ENCODE measurements at regions of chr9 and their contacts with region 1.

Region 1: DNA sequence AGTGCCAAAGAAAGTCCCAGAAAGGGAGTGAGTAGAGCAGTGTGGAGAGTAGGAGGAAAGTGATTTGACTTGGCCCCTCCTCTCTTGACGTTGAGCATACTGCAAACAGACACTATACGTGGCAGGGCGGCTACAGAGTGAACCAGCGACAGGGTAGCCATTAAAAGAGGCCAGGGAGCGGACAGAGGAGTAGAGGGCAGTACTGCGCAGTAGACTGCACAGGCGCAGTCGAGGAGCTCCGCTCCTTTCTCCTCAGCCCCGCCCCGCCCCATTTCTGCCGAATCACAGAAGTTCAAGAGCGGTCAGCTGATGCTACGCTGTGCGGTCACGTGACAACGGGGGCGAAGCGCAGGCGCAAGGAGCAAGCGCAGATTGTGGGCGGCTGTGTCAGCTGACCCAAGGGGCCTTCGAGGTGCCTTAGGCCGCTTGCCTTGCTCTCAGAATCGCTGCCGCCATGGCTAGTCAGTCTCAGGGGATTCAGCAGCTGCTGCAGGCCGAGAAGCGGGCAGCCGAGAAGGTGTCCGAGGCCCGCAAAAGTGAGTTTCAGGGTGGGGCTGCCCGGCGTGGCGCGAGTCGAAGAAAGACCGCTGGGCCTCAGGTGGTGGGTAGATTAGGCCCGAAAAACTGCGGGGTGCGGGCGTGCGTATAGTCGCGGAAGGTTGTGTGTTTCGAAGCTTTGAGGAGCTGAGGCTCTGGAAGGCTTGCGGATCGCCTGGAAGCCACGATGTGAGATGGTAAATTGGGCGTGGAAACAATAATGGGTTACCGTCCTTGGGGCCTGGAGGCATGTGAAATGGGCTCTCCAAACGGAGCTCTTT is at the start of gene ATP6V1G1:
- DNase-seq: peak; percentile 98 to 99
- ATAC-seq: peak; percentile 95 to 99 (median 96)
- H3K4me3 ChIP-seq: peak within 1 kb of the TSS; percentile 95
- H3K4me3 Mint-ChIP-seq: peak within 1 kb of the TSS; percentile 99
- H3K27ac ChIP-seq: peak within 1 kb of the TSS; percentile 89
- H3K27ac Mint-ChIP-seq: peak within 1 kb of the TSS; percentile 98 to 99
- H3K4me1 ChIP-seq: peaks cover 42% of the 10 kb centered on the region
- H3K4me1 Mint-ChIP-seq: peaks cover 49 to 50% of the 10 kb centered on the region in 2 donors
- H3K27me3 ChIP-seq: no peaks in the 10 kb centered on the region
- H3K27me3 Mint-ChIP-seq: no peaks in the 10 kb centered on the region
- CTCF ChIP-seq: no peak
- total RNA-seq, gene ATP6V1G1: 83.8 to 101 (median 93.5) TPM

Region 2: GRCh38 chr9:114611516-114612271 is 24.1 kb after region 1 on chr9:
- intact Hi-C with region 1: loop called (anchors 2 kb)
- DNase-seq: peak in 1 of 2 donors; percentile 71
- ATAC-seq: peak; percentile 74 to 80 (median 75)
- H3K4me3 ChIP-seq: peak overlapping the region; percentile 77
- H3K4me3 Mint-ChIP-seq: peak overlapping the region; percentile 90
- H3K27ac ChIP-seq: peak overlapping the region; percentile 83
- H3K27ac Mint-ChIP-seq: peak overlapping the region; percentile 74 to 88
- H3K4me1 ChIP-seq: peaks cover 31% of the 10 kb centered on the region
- H3K4me1 Mint-ChIP-seq: peaks cover 21 to 29% of the 10 kb centered on the region in 2 donors
- H3K27me3 ChIP-seq: no peaks in the 10 kb centered on the region
- H3K27me3 Mint-ChIP-seq: no peaks in the 10 kb centered on the region
- CTCF ChIP-seq: no peak

Region 3: GRCh38 chr9:114633438-114634089 is 46.0 kb after region 1 on chr9:
- intact Hi-C with region 1: no loop called
- DNase-seq: no peak
- ATAC-seq: no peak
- H3K4me3 ChIP-seq: no peak overlapping the region
- H3K4me3 Mint-ChIP-seq: no peak overlapping the region
- H3K27ac ChIP-seq: no peak overlapping the region
- H3K27ac Mint-ChIP-seq: no peak overlapping the region
- H3K4me1 ChIP-seq: no peaks in the 10 kb centered on the region
- H3K4me1 Mint-ChIP-seq: no peaks in the 10 kb centered on the region
- H3K27me3 ChIP-seq: no peaks in the 10 kb centered on the region
- H3K27me3 Mint-ChIP-seq: no peaks in the 10 kb centered on the region
- CTCF ChIP-seq: no peak